ENCODE measurements at regions of chr17 and their contacts with region 1.

Region 1: GRCh38 chr17:17496189-17497064 is at the start of gene RASD1:
- DNase-seq: peak; percentile 94 to 98 (median 97)
- ATAC-seq: peak; percentile 93
- H3K4me3 ChIP-seq: peak within 1 kb of the TSS; percentile 64
- H3K27ac ChIP-seq: peak within 1 kb of the TSS; percentile 87
- H3K4me1 ChIP-seq: peaks cover 7% of the 10 kb centered on the region
- H3K27me3 ChIP-seq: no peaks in the 10 kb centered on the region
- total RNA-seq, gene RASD1: 18.7 to 63.8 (median 39.9) TPM

Region 2: DNA sequence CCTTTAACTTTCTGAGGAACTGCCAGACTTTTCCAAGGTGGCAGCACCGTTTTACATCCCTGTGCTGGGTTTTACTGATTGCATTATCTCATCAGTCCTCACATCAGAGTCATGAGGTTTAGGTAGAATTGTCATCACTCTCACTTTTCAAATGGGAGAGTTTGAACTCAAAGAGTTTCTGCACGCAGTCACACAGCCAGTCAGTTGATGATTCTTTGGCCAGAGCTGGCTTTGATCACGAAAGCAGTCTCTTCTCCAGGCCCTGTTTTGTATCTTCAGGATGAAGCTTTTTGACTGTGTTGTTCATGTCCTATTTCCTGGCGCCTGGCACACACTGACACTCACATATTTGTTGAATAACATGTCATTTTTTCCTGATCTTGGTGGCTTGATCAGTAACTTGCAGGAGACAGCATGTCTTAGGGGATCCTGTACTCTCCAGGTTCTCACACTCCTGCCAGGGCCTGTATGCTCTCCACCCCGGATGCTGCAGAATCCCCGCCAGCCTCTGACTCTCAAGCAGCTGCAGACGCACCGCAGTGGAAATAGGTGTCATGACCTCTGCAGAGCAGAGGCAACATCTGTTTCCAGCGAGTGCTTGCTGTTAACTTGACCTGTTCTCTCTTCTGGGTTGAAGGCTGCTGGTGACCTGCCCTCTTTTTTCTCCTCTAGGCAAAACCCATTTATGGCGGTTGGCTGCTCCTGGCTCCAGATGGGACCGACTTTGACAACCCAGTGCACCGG is 421.2 kb before region 1 on chr17:
- intact Hi-C with region 1: no loop called
- DNase-seq: peak in 2 of 3 donors; percentile 70 to 74
- ATAC-seq: peak; percentile 14 to 50
- H3K4me3 ChIP-seq: no peak overlapping the region
- H3K27ac ChIP-seq: peak overlapping the region; percentile 9
- H3K4me1 ChIP-seq: peaks cover 48% of the 10 kb centered on the region
- H3K27me3 ChIP-seq: no peaks in the 10 kb centered on the region

Region 3: DNA sequence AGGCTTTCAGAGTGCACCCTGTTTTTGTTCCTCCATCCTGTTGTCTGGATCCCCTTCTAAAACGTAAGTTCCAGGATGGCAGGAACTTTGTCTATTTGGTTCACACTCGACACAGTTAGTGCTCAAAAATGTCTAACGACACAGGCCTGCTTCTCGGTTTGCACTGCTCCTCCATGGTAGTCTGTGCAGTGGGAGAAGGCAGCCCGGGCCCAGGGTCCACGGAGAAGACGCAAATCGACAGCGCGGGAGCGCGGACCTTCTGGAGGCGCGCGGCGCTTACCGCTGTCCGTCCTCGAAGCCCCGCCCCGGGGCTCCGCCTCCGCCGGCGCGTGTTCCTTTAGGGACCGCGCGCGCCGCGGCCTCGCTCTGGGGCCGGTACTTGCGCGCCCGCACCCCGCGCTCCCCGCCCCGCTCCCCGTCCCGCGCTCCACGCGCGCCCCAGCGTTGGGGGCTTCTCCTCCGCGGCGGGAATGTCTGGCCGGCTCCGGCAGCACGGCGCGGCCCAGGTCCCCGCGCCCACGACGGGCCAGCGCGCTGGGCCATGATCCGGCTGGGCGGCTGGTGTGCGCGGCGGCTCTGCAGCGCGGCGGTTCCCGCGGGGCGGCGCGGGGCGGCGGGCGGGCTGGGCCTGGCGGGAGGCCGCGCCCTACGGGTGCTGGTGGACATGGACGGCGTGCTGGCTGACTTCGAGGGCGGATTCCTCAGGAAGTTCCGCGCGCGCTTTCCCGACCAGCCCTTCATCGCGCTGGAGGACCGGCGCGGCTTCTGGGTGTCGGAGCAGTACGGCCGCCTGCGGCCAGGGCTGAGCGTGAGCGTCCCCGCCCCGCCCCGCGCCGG is 193.2 kb before region 1 on chr17 and contains the start of gene NT5M:
- intact Hi-C with region 1: no loop called
- DNase-seq: peak; percentile 80 to 95 (median 90)
- ATAC-seq: peak; percentile 87 to 92
- H3K4me3 ChIP-seq: peak within 1 kb of the TSS; percentile 74
- H3K27ac ChIP-seq: peak within 1 kb of the TSS; percentile 13
- H3K4me1 ChIP-seq: no peaks in the 10 kb centered on the region
- H3K27me3 ChIP-seq: no peaks in the 10 kb centered on the region
- total RNA-seq, gene NT5M: 3.4 to 6.1 (median 5.2) TPM

Region 4: GRCh38 chr17:17376362-17376761 is 120.1 kb before region 1 on chr17:
- intact Hi-C with region 1: no loop called
- DNase-seq: peak in 1 of 3 donors; percentile 48
- ATAC-seq: peak; percentile 68 to 70
- H3K4me3 ChIP-seq: no peak overlapping the region
- H3K27ac ChIP-seq: no peak overlapping the region
- H3K4me1 ChIP-seq: peaks cover 5% of the 10 kb centered on the region
- H3K27me3 ChIP-seq: no peaks in the 10 kb centered on the region

Region 5: GRCh38 chr17:17420561-17421269 is 75.7 kb before region 1 on chr17:
- intact Hi-C with region 1: loop called in 1 of 4 experiments (anchors 10 kb)
- DNase-seq: peak; percentile 90 to 92 (median 92)
- ATAC-seq: peak; percentile 71 to 77
- H3K4me3 ChIP-seq: no peak overlapping the region
- H3K27ac ChIP-seq: peak overlapping the region; percentile 70
- H3K4me1 ChIP-seq: peaks cover 10% of the 10 kb centered on the region
- H3K27me3 ChIP-seq: no peaks in the 10 kb centered on the region

Region 6: GRCh38 chr17:17568749-17569195 is 72.3 kb after region 1 on chr17:
- intact Hi-C with region 1: loop called (anchors 2 to 5 kb)
- DNase-seq: peak; percentile 70 to 92 (median 89)
- ATAC-seq: peak in 1 of 2 donors; percentile 28
- H3K4me3 ChIP-seq: no peak overlapping the region
- H3K27ac ChIP-seq: peak overlapping the region; percentile 53
- H3K4me1 ChIP-seq: peaks cover 26% of the 10 kb centered on the region
- H3K27me3 ChIP-seq: no peaks in the 10 kb centered on the region

Region 7: DNA sequence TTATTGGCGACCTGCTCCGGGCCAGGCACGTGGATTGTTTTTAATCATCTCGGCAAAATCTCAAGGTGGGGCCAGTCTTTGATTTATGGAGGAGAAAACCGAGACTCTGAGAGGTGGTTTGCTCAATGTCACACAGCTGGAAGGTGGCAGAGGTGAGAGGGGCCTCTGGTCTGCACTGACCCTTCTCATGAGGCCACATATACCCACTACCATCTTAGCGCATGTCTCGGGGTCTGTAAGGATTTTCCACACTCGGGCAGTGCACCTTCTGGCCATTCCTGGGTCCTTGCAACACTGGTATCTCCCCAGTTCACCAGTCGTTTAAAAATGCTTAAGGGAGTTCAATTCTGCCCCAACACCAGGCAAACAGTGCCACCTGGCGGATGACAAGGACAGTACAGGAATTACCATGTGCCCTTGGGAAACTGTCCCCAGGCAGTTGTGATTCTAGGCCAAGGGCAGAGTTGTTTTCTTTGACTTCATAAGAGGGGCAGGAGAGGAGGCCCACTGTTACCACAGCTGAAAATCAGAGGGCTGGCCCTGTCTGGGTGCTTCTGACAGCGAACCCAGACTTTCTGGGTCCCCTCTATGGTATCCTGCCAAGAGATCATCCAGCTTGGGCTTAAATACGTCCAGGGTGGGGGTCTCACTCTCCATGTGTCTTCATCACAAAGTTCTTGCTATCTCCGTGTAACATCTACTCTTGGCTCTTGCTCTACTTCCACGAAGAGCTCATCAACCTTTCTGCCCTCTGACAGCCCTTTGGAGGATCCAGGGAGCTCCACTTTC is 145.4 kb after region 1 on chr17:
- intact Hi-C with region 1: loop called in 1 of 4 experiments (anchors 5 kb)
- DNase-seq: peak; percentile 76 to 87 (median 84)
- ATAC-seq: peak; percentile 84 to 88
- H3K4me3 ChIP-seq: no peak overlapping the region
- H3K27ac ChIP-seq: no peak overlapping the region
- H3K4me1 ChIP-seq: no peaks in the 10 kb centered on the region
- H3K27me3 ChIP-seq: no peaks in the 10 kb centered on the region

Measured in right cardiac atrium (tissue), 5 donors.